PC-3 (cell line): ENCODE measurements at regions of chr5 and their contacts with region 1.

Region 1: DNA sequence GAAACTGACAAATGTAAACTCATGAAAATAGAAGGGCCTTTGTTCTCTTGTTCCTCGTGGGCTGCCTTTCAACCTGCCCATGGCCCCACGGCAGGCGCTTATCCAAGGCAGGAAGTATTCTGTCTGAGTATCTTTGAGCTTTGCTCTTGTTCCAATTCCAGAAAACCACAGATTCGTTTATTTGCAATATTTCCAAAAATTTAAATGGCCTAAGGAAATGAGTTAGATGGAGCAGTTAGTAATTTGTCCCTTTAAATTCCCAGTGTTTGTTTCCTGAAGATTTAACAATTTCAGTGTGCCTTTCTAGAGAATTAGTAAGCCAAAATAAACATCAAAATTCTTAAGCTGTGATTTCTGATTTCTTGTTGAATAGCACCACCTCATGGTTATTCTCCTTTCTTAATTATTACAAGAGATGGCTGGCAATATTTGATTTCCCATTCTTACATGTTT is 299.4 kb upstream of the RASA1 start:
- DNase-seq: peak; percentile 94
- ATAC-seq: peak; percentile 90
- H3K4me3 ChIP-seq: peak overlapping the region; percentile 48
- H3K27ac ChIP-seq: peak overlapping the region; percentile 58
- H3K4me1 ChIP-seq: peaks cover 17% of the 10 kb centered on the region
- H3K27me3 ChIP-seq: no peaks in the 10 kb centered on the region
- CTCF ChIP-seq: peak; percentile 91

Region 2: GRCh38 chr5:86617756-86618576 is 350.4 kb before region 1 on chr5 and contains the start of gene COX7C:
- CTCF ChIA-PET with region 1: no interaction called
- POLR2A ChIA-PET with region 1: interaction called, 4 read pairs
- intact Hi-C with region 1: loop called (anchors 5 kb)
- DNase-seq: peak; percentile 99
- ATAC-seq: peak; percentile 97
- H3K4me3 ChIP-seq: peak within 1 kb of the TSS; percentile 91
- H3K27ac ChIP-seq: peak within 1 kb of the TSS; percentile 59
- H3K4me1 ChIP-seq: peaks cover 10% of the 10 kb centered on the region
- H3K27me3 ChIP-seq: no peaks in the 10 kb centered on the region
- CTCF ChIP-seq: no peak
- total RNA-seq, gene COX7C: 568 and 659 TPM in 2 replicates

Region 3: GRCh38 chr5:86814907-86815306 is 153.4 kb before region 1 on chr5:
- CTCF ChIA-PET with region 1: no interaction called
- POLR2A ChIA-PET with region 1: no interaction called
- intact Hi-C with region 1: loop called (anchors 5 kb)
- DNase-seq: peak; percentile 47
- ATAC-seq: peak; percentile 94
- H3K4me3 ChIP-seq: no peak overlapping the region
- H3K27ac ChIP-seq: peak overlapping the region; percentile 42
- H3K4me1 ChIP-seq: peaks cover 14% of the 10 kb centered on the region
- H3K27me3 ChIP-seq: no peaks in the 10 kb centered on the region
- CTCF ChIP-seq: no peak

Region 4: GRCh38 chr5:86909456-86910295 is 58.7 kb before region 1 on chr5:
- CTCF ChIA-PET with region 1: interaction called, 6 read pairs
- POLR2A ChIA-PET with region 1: no interaction called
- intact Hi-C with region 1: loop called (anchors 1 kb)
- DNase-seq: peak; percentile 97
- ATAC-seq: peak; percentile 90
- H3K4me3 ChIP-seq: peak overlapping the region; percentile 44
- H3K27ac ChIP-seq: peak overlapping the region; percentile 89
- H3K4me1 ChIP-seq: peaks cover 39% of the 10 kb centered on the region
- H3K27me3 ChIP-seq: no peaks in the 10 kb centered on the region
- CTCF ChIP-seq: no peak

Region 5: DNA sequence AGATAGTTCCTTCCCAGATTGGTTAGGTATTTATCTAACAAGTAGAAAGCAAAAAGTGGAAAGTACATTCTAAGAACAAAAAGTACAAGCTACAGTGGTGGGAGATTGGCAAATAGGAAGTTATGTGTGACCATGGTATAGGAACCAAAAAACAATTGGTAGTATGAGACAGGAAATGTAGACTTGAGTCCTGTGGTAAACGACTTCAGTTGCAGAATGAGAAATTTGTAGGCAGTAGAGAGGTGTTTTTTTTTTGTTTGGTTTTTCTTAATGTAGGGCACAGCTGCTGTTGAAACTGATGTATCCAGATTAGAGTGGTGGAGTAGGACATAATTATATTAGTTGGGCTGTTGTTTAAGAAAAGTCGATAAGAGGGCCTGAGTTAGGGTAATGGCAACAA is 372.4 kb after region 1 on chr5:
- CTCF ChIA-PET with region 1: no interaction called
- POLR2A ChIA-PET with region 1: no interaction called
- intact Hi-C with region 1: no loop called
- DNase-seq: no peak
- ATAC-seq: no peak
- H3K4me3 ChIP-seq: no peak overlapping the region
- H3K27ac ChIP-seq: no peak overlapping the region
- H3K4me1 ChIP-seq: no peaks in the 10 kb centered on the region
- H3K27me3 ChIP-seq: no peaks in the 10 kb centered on the region
- CTCF ChIP-seq: no peak